ENCODE measurements at regions of chr16 and their contacts with region 1.

Region 1: DNA sequence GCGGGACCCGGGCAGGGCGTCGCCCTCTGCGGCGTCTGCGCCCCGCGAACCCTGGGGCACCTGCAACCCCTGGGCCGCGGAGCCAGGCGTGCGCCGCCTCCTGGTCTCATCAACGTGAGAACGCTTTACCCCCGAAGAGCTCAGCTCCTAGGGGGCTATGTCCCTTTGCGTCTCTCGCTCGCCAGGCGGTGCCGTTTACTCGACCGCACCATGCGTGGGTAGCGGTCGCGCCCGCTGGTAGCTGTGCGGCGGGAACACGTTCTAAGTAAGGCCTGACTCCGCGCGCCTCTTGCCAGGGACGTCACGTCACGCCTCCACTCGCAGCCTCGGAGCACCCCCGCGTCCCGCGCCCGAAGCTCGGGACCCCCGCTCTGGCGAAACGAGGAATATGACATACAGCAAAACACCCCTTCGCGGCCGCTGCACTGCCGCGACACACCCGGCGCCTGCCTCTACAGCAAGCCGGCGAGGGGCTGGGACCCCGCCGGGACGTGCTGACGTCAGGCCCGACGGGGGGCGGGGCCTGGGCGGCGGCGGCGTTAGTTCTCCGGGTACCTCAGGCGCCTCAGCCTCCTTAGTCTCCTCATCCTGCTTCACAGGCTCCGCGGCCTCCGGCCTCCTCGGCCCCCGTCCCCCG is at the start of gene RAB11FIP3:
- DNase-seq: peak; percentile 86 to 93 (median 89)
- ATAC-seq: peak; percentile 59 to 91 (median 88)
- H3K4me3 ChIP-seq: peak within 1 kb of the TSS; percentile 44 to 86 (median 76)
- H3K27ac ChIP-seq: peak within 1 kb of the TSS; percentile 83 to 99 (median 96)
- H3K4me1 ChIP-seq: peaks cover 0 to 46% (median 28%) of the 10 kb centered on the region in 12 donors
- H3K27me3 ChIP-seq: no peaks in the 10 kb centered on the region
- CTCF ChIP-seq: peak in 6 of 12 donors; percentile 14 to 53 (median 24)
- POLR2A ChIP-seq: peak; percentile 50 to 94
- total RNA-seq, gene RAB11FIP3: 19.9 to 39.9 (median 31.9) TPM

Region 2: DNA sequence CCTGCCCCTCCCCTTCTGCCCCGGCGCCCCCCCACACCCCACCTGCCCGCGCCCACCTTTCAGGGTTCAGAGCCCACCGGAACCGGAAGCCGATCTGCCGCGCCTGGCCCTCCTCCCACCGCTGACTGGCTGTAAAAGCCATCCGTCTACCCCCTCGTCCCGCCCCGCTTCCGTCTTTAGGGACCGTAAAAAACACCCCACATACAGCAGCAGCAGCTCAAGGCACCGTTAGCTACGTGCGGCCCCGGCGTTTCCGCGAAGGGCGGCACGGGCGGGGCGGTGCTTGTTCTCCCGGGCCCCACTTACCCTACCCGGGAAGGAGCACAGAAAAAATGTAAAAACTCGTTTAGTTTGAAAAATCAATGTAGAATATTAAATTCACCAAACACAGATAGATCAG is 54.8 kb before region 1 on chr16 and contains the start of gene MRPL28:
- intact Hi-C with region 1: no loop called
- DNase-seq: peak; percentile 94 to 96 (median 95)
- ATAC-seq: peak; percentile 90 to 98 (median 94)
- H3K4me3 ChIP-seq: peak within 1 kb of the TSS in 11 of 12 donors; percentile 28 to 61 (median 52)
- H3K27ac ChIP-seq: peak within 1 kb of the TSS in 11 of 12 donors; percentile 31 to 86 (median 68)
- H3K4me1 ChIP-seq: peaks cover 3 to 22% (median 15%) of the 10 kb centered on the region in 12 donors
- H3K27me3 ChIP-seq: no peaks in the 10 kb centered on the region
- CTCF ChIP-seq: no peak
- POLR2A ChIP-seq: peak in 1 of 2 donors; percentile 55
- total RNA-seq, gene MRPL28: 66.3 to 126 (median 77.7) TPM

Region 3: GRCh38 chr16:381789-382717 is 43.1 kb before region 1 on chr16 and contains the start of gene PGAP6:
- intact Hi-C with region 1: no loop called
- DNase-seq: peak in 4 of 5 donors; percentile 72 to 84 (median 79)
- ATAC-seq: peak; percentile 43 to 80 (median 68)
- H3K4me3 ChIP-seq: peak within 1 kb of the TSS; percentile 70 to 100 (median 90)
- H3K27ac ChIP-seq: peak within 1 kb of the TSS; percentile 54 to 92 (median 83)
- H3K4me1 ChIP-seq: peaks cover 0 to 56% (median 29%) of the 10 kb centered on the region in 12 donors
- H3K27me3 ChIP-seq: no peaks in the 10 kb centered on the region
- CTCF ChIP-seq: no peak
- POLR2A ChIP-seq: peak in 1 of 2 donors; percentile 62
- total RNA-seq, gene PGAP6: 32.3 to 65.3 (median 44.9) TPM

Region 4: GRCh38 chr16:401468-402348 is 23.5 kb before region 1 on chr16 and contains the start of gene DECR2:
- intact Hi-C with region 1: loop called in 2 of 10 experiments (anchors 1 to 2 kb)
- DNase-seq: peak; percentile 96 to 98 (median 97)
- ATAC-seq: peak; percentile 68 to 93 (median 89)
- H3K4me3 ChIP-seq: peak within 1 kb of the TSS; percentile 56 to 98 (median 89)
- H3K27ac ChIP-seq: peak within 1 kb of the TSS; percentile 82 to 95 (median 92)
- H3K4me1 ChIP-seq: peaks cover 0 to 33% (median 12%) of the 10 kb centered on the region in 12 donors
- H3K27me3 ChIP-seq: no peaks in the 10 kb centered on the region
- CTCF ChIP-seq: peak; percentile 24 to 83 (median 60)
- POLR2A ChIP-seq: peak in 1 of 2 donors; percentile 85
- total RNA-seq, gene DECR2: 6.9 to 20.6 (median 12.2) TPM

Region 5: GRCh38 chr16:527006-527753 is 102.0 kb after region 1 on chr16 and contains the start of gene CAPN15:
- intact Hi-C with region 1: loop called in 1 of 10 experiments (anchors 10 kb)
- DNase-seq: peak; percentile 88 to 94 (median 90)
- ATAC-seq: peak; percentile 60 to 89 (median 84)
- H3K4me3 ChIP-seq: peak within 1 kb of the TSS; percentile 58 to 94 (median 76)
- H3K27ac ChIP-seq: peak within 1 kb of the TSS; percentile 89 to 100 (median 98)
- H3K4me1 ChIP-seq: peaks cover 11 to 59% (median 39%) of the 10 kb centered on the region in 12 donors
- H3K27me3 ChIP-seq: no peaks in the 10 kb centered on the region
- CTCF ChIP-seq: peak in 5 of 12 donors; percentile 6 to 33 (median 26)
- POLR2A ChIP-seq: peak in 1 of 2 donors; percentile 91
- total RNA-seq, gene CAPN15: 12.0 to 35.5 (median 20.0) TPM

Region 6: DNA sequence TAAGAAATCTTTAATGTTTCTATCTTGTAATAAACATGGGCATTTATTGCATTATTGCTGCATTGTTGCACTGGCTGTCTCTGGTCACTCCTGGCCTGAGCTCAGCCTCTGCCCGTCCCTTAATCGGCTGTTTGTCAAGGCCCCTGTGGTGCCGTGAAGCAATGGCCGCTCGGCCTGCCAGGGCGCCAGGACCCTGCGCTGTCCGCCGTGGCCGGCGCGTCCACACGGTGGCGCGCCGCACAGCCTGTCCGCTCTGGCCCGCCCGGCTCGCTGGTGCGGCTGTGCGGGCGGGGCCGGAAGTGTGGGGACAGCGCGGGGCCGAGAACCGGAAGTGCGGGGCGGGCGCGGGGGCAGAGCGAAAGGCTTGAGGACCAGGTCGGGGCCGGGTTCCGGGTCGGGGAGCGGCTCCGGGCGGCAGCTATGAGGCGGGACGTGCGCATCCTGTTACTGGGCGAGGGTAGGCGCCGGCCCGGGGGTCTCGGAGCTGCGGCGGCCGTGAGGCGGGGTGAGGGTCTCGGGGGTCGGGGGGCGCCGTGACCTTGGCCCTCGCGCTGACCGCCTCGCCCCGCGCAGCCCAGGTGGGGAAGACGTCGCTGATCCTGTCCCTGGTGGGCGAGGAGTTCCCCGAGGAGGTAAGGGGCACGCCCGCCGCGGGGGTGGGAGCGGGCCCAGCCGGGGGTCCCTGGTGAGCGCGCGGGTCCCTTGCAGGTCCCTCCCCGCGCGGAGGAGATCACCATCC is 242.7 kb after region 1 on chr16 and contains the start of gene RHOT2:
- intact Hi-C with region 1: loop called in 1 of 10 experiments (anchors 10 kb)
- DNase-seq: peak; percentile 95 to 97 (median 95)
- ATAC-seq: peak; percentile 74 to 93 (median 90)
- H3K4me3 ChIP-seq: peak within 1 kb of the TSS; percentile 67 to 100 (median 98)
- H3K27ac ChIP-seq: peak within 1 kb of the TSS; percentile 49 to 99 (median 94)
- H3K4me1 ChIP-seq: peaks cover 6 to 22% (median 17%) of the 10 kb centered on the region in 12 donors
- H3K27me3 ChIP-seq: no peaks in the 10 kb centered on the region
- CTCF ChIP-seq: peak; percentile 71 to 98 (median 92)
- POLR2A ChIP-seq: peak; percentile 45 to 84
- total RNA-seq, gene RHOT2: 33.7 to 102 (median 83.5) TPM